ENCODE measurements at regions of chr9 and their contacts with region 1.

Region 1: DNA sequence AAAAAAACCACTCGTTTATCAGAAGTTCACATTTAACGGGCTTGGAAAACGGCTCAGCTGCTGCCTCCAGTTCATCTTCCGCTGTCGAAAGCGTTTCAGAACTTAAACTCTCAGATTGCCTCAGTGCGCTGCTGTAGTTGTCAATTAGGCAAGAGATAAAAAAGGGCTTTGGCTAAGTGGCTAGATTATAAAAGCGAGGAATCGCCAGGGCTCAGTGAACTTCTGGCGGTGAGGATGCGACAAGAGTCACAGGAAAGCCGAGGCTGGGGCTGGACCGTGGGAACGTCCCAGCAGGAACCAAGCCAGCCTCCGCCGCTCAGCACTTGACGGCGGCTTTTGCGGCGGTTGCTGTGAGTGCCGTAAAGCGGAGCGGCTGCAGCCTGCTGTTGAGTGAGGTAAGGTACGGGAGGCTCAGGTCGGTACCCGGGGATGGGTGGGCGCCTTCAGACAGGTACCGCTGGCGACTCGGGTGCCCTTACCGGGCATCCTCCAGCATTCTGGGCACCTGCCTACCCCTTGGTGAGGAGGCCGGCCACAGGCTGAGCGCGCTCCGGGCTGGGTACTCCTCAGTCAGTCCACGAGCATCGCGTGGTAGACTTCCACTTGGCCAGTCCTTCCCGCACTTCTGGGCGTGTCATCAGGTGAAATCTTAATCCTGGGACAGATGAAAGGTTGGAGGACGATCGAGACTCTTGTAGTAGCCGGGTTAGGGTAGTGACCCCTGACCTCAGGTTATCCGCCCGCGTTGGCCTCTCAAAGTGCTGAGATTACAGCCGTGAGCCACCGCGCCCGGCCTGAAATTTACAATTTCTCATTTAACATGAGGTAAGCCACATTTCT is at the start of gene FKTN:
- DNase-seq: peak; percentile 87
- H3K4me3 ChIP-seq: peak within 1 kb of the TSS; percentile 96
- H3K27ac ChIP-seq: no peak within 1 kb of the TSS
- H3K4me1 ChIP-seq: peaks cover 15% of the 10 kb centered on the region
- CTCF ChIP-seq: no peak
- total RNA-seq, gene FKTN: 8.1 and 10.7 TPM in 2 replicates

Region 2: DNA sequence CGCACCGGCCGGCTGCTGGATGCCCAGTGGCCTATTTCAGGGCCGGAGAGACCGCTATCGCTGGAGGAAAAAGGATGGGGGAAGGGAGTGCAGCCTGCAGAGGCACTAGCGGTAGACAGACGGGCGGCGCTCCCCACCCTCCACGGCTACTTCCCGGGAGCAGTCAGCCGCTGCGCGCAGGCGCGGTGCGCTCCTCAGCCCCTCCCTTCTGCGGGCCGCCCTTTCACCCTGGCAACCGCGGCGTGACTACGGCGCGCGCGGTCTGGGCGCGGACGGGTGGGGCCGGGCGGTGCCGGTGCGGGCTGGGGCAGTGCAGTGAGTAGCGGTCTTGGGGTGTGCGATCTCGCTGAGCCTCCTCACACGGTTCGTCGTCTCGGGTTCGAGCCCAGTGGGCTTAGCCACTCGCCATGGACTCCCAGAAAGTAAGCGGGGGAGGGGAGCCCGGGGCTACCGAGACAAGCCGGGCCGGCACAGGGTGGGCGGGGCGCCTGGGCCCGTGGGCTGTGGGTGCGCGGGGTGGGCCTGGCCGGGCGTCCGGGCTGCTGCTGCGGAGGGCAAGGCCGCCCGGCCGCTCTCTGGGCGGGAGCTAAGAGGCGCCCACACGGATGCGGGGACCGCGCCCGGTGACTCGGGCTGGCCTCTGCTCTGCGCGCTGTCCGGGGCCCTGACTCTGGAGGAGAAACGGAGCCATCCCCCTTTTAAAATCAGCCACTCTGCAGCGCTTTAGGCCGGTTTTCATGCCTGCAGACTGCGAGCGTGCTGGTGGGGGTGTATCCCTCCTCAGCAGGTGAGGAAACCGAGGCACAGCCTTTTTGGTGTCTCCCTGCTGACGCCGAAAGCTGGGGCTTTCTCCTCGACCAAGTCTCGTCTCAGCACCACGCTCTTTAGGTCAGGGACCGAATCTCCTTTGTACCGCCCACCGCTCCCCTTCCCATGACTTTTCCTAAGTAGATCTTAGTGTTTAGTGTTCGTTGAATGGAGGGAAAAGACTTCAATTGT is 109.9 kb before region 1 on chr9 and contains the start of gene FSD1L:
- CTCF ChIA-PET with region 1: no interaction called
- POLR2A ChIA-PET with region 1: no interaction called
- intact Hi-C with region 1: loop called (anchors 5 kb)
- DNase-seq: peak; percentile 92
- H3K4me3 ChIP-seq: peak within 1 kb of the TSS; percentile 87
- H3K27ac ChIP-seq: no peak within 1 kb of the TSS
- H3K4me1 ChIP-seq: peaks cover 20% of the 10 kb centered on the region
- CTCF ChIP-seq: peak; percentile 66
- total RNA-seq, gene FSD1L: 3.1 and 4.4 TPM in 2 replicates

Region 3: DNA sequence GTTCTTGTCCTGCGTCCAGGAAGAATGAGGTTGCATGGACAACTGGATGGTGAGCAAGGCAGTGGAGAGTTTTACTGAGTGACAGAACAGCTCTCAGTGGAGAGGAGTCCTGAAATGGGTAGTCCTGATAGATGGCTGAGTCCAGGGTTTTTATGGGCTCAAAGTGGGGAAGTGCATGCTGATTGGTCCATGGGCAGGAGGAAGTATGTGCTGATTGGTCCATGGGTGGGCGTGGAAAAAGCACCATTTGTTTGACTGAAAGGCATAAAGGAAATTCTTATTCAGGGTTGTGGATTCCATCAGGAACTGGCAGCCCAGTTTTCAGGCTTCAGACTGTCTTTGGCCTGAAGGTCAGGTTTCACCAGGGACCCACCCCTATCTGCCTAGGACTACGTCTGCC is 99.6 kb before region 1 on chr9:
- CTCF ChIA-PET with region 1: no interaction called
- POLR2A ChIA-PET with region 1: no interaction called
- intact Hi-C with region 1: no loop called
- DNase-seq: peak; percentile 37
- H3K4me3 ChIP-seq: no peak overlapping the region
- H3K27ac ChIP-seq: no peak overlapping the region
- H3K4me1 ChIP-seq: no peaks in the 10 kb centered on the region
- CTCF ChIP-seq: no peak

Region 4: DNA sequence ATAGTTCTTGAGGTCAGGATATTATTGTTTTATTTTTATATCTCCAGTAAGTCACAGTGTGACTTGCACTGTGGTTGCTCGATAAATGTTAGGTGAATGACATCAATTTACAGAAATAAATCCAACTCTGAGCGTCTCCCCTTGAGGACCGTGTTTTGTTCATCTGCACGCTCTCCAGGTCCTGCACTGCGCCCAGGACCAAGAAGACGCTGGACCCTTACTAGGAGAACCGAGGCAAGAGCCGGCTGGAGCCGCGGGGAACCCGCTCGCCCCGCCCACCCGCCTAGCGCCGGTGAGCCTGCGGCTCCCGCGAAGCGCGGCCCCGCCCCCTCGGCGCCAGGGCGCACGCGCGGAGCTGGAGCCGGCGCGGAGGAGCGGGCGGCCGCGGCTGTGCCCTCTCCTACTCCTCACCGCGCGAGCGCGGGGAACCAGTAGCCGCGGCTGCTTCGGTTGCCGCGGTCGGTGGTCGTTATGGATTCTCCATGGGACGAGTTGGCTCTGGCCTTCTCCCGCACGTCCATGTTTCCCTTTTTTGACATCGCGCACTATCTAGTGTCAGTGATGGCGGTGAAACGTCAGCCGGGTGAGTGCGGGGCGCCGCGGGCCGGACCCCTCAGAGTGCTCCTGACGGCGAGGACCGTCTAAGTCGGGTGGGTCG is 136.3 kb after region 1 on chr9 and contains the start of gene TMEM38B:
- CTCF ChIA-PET with region 1: no interaction called
- POLR2A ChIA-PET with region 1: interaction called, 3 read pairs
- intact Hi-C with region 1: loop called (anchors 5 kb)
- DNase-seq: peak; percentile 86
- H3K4me3 ChIP-seq: peak within 1 kb of the TSS; percentile 84
- H3K27ac ChIP-seq: no peak within 1 kb of the TSS
- H3K4me1 ChIP-seq: peaks cover 19% of the 10 kb centered on the region
- CTCF ChIP-seq: no peak
- total RNA-seq, gene TMEM38B: 11.9 and 15.9 TPM in 2 replicates